Endothelial cell of umbilical vein (primary cell): ENCODE measurements at regions of chr9 and their contacts with region 1.

Region 1: DNA sequence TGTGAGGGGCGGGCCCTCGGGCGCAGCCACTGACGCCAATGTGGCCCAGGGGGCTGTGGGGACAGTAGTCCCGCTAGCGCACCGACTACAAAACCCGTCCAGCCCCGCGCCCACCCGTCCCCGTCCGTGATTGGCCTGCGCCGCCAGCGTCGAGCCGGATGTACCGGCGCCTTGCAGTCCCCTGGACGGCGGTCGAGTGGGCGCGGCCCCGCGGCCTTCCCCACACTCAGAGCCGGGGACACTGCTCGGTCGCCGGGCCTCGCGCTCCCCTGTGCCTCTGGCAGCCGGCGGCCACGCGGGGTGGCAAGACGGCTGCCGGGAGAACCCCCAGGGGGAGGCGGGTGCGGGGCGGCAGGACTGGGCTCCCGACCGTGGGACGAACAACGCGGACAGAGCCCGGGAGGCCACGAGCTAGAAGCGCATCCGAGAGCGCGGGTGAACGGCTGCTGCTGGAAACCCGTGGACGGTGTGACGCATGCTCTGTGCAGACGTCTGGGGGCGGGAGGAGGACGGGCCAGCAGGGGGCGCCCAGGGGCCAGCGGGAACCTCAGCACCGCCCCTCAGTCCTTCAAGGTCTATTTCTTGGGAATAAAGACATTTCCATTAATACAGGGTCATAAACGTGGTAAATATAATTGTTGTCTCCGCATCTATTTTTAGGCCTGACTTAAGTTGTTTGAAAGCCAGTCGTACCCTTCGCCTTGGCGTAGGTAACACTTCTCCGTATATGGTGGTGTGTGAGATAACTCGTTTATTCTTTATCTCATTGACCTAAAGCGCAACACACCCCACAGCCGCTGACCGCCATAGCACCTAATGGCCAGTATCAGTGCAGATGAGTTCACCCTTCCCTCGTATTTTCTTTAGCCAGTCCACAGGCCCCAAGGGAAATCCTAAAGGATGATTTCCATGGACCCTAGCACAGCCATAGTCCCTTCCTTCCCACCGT is 629 bp upstream of the BICD2 start:
- DNase-seq: peak; percentile 98
- H3K4me3 ChIP-seq: peak overlapping the region; percentile 35 to 99 (median 66)
- H3K27ac ChIP-seq: peak overlapping the region; percentile 95
- H3K4me1 ChIP-seq: peaks cover 16% of the 10 kb centered on the region
- H3K27me3 ChIP-seq: no peaks in the 10 kb centered on the region
- CTCF ChIP-seq: peak; percentile 98 to 99
- POLR2A ChIP-seq: peak; percentile 64

Region 2: GRCh38 chr9:92325269-92325990 is 439.8 kb before region 1 on chr9 and contains the starts of genes CENPP and NOL8:
- CTCF ChIA-PET with region 1: no interaction called
- POLR2A ChIA-PET with region 1: no interaction called
- dilution Hi-C with region 1: no loop called
- intact Hi-C with region 1: loop called (anchors 10 kb)
- DNase-seq: peak; percentile 93
- H3K4me3 ChIP-seq: peak within 1 kb of the TSS; percentile 32 to 91 (median 67)
- H3K27ac ChIP-seq: peak within 1 kb of the TSS; percentile 89
- H3K4me1 ChIP-seq: peaks cover 13% of the 10 kb centered on the region
- H3K27me3 ChIP-seq: no peaks in the 10 kb centered on the region
- CTCF ChIP-seq: no peak
- POLR2A ChIP-seq: peak; percentile 85
- total RNA-seq, gene CENPP: 8.7 and 12.0 TPM in 2 replicates
- total RNA-seq, gene NOL8: 36.1 and 41.6 TPM in 2 replicates

Region 3: GRCh38 chr9:92716557-92716956 is 48.7 kb before region 1 on chr9:
- CTCF ChIA-PET with region 1: interaction called, 30 read pairs
- POLR2A ChIA-PET with region 1: no interaction called
- dilution Hi-C with region 1: no loop called
- intact Hi-C with region 1: loop called (anchors 1 kb)
- DNase-seq: peak; percentile 50
- H3K4me3 ChIP-seq: no peak overlapping the region
- H3K27ac ChIP-seq: no peak overlapping the region
- H3K4me1 ChIP-seq: peaks cover 5% of the 10 kb centered on the region
- H3K27me3 ChIP-seq: no peaks in the 10 kb centered on the region
- CTCF ChIP-seq: peak; percentile 87 to 89
- POLR2A ChIP-seq: no peak

Region 4: DNA sequence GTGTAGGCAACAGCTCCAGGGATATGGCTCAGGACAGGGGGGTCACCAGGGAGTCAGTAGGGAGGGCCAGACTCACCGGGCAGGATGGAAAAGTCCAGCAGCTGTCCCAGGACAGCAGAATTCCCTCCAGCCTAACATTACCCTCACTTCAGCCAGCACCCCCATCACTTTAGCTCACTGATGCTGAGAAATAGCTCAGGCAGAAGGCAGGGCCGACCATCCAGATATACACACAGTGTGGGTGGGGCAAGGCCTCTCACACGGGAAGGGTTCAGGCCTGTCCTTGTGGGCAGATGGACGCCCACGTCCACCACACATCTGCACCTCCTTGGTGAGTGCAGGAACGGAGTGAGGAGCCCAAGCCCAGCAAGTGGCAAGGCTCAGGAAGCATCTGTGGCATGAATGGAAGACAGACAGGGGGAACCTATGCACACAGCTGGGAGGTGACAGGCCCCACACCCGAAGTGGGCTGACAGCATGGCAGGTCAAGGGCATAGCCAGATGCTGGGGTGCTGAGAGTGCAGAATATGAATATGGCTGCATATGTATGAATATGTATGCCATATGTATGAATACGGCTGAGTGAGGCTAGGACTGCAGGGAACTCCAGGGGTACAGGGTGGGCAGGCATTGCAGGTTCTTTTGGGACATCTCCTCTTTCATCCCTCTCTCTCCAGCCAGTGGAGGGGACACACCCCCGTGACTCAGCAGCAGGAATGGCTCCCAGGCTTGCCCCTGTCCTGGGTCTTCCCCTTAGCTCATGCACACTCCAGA is 17.6 kb before region 1 on chr9:
- CTCF ChIA-PET with region 1: interaction called, 5 read pairs
- POLR2A ChIA-PET with region 1: interaction called, 6 read pairs
- dilution Hi-C with region 1: no loop called
- intact Hi-C with region 1: loop called (anchors 1 kb)
- DNase-seq: peak; percentile 9
- H3K4me3 ChIP-seq: no peak overlapping the region
- H3K27ac ChIP-seq: peak overlapping the region; percentile 64
- H3K4me1 ChIP-seq: peaks cover 28% of the 10 kb centered on the region
- H3K27me3 ChIP-seq: no peaks in the 10 kb centered on the region
- CTCF ChIP-seq: no peak
- POLR2A ChIP-seq: no peak

Region 5: DNA sequence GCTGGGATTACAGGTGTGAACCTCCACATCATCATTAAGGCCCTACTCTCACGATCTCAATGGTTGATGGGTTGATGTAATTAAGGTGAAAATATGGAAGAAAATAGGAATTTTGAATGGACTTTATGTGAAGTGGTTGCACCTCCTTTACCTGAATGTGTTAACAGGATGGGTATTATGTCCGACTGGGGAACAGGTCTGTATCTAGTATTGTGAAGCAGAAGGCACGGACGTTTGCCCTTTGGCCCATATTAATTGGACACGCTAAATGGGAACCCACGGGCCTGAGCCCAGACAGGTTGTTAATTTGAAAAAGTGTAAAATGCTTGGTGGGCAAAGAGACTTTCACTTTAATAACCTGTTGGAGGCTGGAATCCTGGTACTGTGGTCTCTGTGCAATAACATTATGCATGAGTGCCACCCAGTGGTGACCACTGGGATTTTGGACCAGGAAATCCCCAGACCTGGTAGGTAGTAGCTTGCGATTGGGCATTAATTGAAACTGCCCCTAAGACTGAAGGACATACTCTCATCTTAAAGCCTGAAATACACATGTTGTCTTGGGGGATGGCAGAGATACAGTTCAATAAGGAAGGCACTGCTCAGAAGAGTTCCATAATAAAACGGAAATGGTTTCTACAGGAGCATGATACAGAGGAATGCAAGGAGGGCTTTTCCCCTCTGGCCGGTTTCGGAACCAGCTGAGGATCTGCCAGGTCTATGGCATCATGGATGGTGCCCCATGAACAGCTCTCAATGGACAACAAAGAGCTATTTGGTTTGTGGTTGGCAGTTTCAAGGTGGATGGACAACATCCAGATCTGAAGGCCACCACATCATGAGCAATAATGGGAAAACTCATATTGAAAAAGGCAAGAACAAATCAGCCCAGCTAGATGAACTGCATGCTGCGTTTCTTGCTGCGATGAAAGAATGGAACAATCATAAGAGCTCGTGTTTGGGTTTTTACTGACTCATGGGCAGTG is 25.6 kb after region 1 on chr9:
- CTCF ChIA-PET with region 1: interaction called, 30 read pairs
- POLR2A ChIA-PET with region 1: no interaction called
- dilution Hi-C with region 1: no loop called
- intact Hi-C with region 1: loop called (anchors 1 kb)
- DNase-seq: peak; percentile 84
- H3K4me3 ChIP-seq: no peak overlapping the region
- H3K27ac ChIP-seq: no peak overlapping the region
- H3K4me1 ChIP-seq: no peaks in the 10 kb centered on the region
- H3K27me3 ChIP-seq: peaks cover 4 to 8% of the 10 kb centered on the region in 2 experiments
- CTCF ChIP-seq: peak; percentile 68 to 73
- POLR2A ChIP-seq: no peak

Region 6: GRCh38 chr9:93365427-93366118 is 600.3 kb after region 1 on chr9:
- CTCF ChIA-PET with region 1: no interaction called
- POLR2A ChIA-PET with region 1: no interaction called
- dilution Hi-C with region 1: no loop called
- intact Hi-C with region 1: no loop called
- DNase-seq: no peak
- H3K4me3 ChIP-seq: no peak overlapping the region
- H3K27ac ChIP-seq: no peak overlapping the region
- H3K4me1 ChIP-seq: no peaks in the 10 kb centered on the region
- H3K27me3 ChIP-seq: no peaks in the 10 kb centered on the region
- CTCF ChIP-seq: no peak
- POLR2A ChIP-seq: no peak